Calu3 (cell line): ENCODE measurements at regions of chr1 and their contacts with region 1.

Region 1: GRCh38 chr1:94228640-94229375 is 8.6 kb downstream of the ARHGAP29 start:
- DNase-seq: no peak
- H3K4me3 Mint-ChIP-seq: no peak overlapping the region
- H3K27ac Mint-ChIP-seq: no peak overlapping the region
- H3K4me1 Mint-ChIP-seq: peaks cover 25% of the 10 kb centered on the region
- H3K27me3 Mint-ChIP-seq: no peaks in the 10 kb centered on the region
- CTCF ChIP-seq: no peak

Region 2: DNA sequence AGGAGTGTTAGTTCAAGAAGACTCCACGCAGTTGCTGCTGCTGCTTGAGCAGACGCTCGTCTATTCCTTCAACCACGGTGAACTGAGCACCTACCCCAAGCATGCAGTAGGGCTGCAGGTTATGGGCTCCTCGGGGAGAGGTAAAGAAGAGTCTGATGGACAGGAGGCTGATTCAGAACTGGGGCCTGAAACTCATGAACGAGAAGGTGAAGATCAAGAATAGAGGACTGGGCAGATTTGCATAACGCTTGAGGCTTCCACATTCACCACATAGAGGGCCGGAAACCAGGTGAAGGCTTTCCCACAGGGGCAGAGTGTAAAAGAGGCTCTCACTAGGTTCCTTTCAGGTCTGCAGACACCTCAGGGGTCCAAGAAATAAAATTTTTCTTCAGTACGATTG is 116.9 kb before region 1 on chr1:
- CTCF ChIA-PET with region 1: no interaction called
- intact Hi-C with region 1: no loop called
- DNase-seq: no peak
- H3K4me3 Mint-ChIP-seq: no peak overlapping the region
- H3K27ac Mint-ChIP-seq: no peak overlapping the region
- H3K4me1 Mint-ChIP-seq: no peaks in the 10 kb centered on the region
- H3K27me3 Mint-ChIP-seq: peaks cover 19% of the 10 kb centered on the region
- CTCF ChIP-seq: no peak

Region 3: GRCh38 chr1:94191216-94191615 is 37.6 kb before region 1 on chr1:
- CTCF ChIA-PET with region 1: no interaction called
- intact Hi-C with region 1: loop called (anchors 5 kb)
- DNase-seq: no peak
- H3K4me3 Mint-ChIP-seq: no peak overlapping the region
- H3K27ac Mint-ChIP-seq: no peak overlapping the region
- H3K4me1 Mint-ChIP-seq: peaks cover 20% of the 10 kb centered on the region
- H3K27me3 Mint-ChIP-seq: no peaks in the 10 kb centered on the region
- CTCF ChIP-seq: no peak

Region 4: DNA sequence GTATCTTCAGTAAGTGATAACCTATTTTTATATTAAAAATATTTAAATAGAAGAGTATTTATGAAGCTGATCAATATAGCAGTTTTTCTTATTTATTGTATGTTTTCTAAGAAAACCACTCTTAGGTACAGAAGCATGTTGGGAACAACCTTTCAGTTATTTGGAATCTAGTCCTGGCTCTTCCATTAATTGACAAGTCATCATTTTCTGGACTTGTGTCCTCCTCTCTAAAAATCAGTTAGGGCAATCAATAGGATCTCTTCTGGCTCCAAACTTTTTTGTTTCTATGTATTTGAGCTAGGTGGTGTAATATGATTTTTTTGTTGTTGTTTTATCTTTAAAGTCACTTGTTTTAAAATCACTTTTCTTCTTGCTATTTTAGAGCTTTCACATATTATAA is 246.4 kb after region 1 on chr1:
- CTCF ChIA-PET with region 1: no interaction called
- intact Hi-C with region 1: no loop called
- DNase-seq: no peak
- H3K4me3 Mint-ChIP-seq: no peak overlapping the region
- H3K27ac Mint-ChIP-seq: no peak overlapping the region
- H3K4me1 Mint-ChIP-seq: peaks cover 7% of the 10 kb centered on the region
- H3K27me3 Mint-ChIP-seq: no peaks in the 10 kb centered on the region
- CTCF ChIP-seq: no peak